ENCODE measurements at regions of chr4 and their contacts with region 1.

Region 1: DNA sequence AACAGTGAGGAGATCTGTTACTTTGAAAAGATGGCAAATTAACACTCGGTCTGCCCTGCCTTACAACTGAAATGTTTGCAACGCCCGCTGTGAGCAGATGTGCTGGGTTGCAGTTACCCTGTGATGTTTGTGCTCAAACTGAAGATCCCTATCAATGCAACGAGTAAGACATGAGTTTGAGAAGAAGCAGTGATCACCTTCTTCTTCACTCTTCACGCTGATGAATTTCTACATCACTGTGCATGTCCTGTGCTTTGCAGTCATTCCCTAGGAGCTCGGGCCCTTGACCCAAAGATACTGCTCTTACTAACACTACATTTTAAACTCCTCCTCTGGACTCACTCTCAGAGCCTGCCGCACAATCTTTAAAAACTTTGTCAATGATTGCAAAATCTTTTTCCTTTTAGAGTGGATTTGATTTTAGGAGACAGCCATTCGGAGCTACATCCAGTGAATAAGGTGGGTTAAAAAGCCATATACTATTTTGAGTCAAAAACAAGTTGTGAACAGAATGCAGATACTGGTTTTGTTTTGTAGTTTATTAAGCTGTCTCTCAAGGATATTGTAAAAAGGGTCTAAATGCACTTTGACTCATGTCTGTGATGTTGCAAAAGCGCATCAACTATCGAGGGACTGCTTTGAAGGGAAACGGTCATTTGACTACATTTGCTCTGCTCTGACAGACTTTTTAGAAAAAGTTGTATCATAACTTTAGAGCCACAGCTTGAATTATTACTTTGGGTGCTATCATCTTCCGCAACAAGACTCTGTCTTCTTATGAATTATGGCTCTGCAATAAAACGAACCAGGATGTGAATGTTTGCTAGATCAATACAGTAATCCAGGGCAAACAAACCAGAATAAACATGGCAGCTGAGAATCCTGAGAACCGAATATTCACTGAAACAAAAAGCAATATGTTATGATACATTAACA is 5.7 kb upstream of the RHOH start:
- DNase-seq: peak; percentile 78
- ATAC-seq: peak; percentile 82
- H3K4me3 ChIP-seq: peak overlapping the region; percentile 52
- H3K27ac ChIP-seq: peak overlapping the region; percentile 94
- H3K4me1 ChIP-seq: peaks cover 32% of the 10 kb centered on the region
- H3K27me3 ChIP-seq: no peaks in the 10 kb centered on the region
- CTCF ChIP-seq: no peak

Region 2: DNA sequence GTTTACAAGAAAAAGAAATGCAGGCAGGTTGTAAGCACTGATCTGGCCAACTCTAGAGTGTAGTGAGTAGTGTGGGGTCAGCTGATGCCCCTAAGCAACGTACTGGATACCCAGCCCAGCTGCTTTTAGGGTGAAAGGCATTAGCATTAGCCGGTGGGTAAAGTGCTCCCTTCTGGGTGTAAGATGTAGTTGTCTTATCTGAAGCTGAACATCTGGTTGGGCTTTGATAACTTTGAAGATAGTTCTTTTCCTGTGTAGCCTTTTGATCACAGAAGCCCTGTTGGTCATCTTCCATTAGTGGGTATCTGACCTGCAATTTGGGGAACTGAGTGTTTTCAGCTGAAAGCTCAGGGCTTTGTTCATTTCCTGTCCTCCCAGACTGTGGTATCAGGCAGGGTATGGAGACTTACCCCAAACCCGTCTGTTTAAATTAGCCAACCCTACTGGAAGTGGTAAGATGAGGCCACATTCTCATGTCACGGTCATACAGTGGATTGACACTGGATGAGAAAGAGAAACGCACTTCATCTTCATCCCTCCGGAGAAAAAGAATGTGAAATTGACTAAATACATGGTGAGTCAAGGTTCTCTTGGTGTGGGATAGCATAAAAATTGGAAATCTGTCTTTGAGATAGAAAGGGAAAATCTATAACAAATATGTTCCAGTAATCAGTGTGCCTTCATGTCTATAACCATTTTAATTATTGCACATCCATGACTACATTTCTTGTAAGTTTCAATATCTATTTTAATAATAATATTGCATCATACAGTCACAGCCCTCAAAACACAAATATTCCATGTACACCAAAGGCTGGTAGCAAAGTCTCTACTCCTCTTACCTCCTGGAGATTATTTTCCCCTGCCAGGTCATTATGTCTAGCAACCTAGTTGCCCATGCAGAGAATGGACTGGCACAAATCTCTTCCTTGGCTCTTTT is 14.4 kb after region 1 on chr4:
- CTCF ChIA-PET with region 1: no interaction called
- POLR2A ChIA-PET with region 1: no interaction called
- intact Hi-C with region 1: no loop called
- DNase-seq: no peak
- ATAC-seq: no peak
- H3K4me3 ChIP-seq: no peak overlapping the region
- H3K27ac ChIP-seq: no peak overlapping the region
- H3K4me1 ChIP-seq: peaks cover 9% of the 10 kb centered on the region
- H3K27me3 ChIP-seq: no peaks in the 10 kb centered on the region
- CTCF ChIP-seq: no peak

Region 3: DNA sequence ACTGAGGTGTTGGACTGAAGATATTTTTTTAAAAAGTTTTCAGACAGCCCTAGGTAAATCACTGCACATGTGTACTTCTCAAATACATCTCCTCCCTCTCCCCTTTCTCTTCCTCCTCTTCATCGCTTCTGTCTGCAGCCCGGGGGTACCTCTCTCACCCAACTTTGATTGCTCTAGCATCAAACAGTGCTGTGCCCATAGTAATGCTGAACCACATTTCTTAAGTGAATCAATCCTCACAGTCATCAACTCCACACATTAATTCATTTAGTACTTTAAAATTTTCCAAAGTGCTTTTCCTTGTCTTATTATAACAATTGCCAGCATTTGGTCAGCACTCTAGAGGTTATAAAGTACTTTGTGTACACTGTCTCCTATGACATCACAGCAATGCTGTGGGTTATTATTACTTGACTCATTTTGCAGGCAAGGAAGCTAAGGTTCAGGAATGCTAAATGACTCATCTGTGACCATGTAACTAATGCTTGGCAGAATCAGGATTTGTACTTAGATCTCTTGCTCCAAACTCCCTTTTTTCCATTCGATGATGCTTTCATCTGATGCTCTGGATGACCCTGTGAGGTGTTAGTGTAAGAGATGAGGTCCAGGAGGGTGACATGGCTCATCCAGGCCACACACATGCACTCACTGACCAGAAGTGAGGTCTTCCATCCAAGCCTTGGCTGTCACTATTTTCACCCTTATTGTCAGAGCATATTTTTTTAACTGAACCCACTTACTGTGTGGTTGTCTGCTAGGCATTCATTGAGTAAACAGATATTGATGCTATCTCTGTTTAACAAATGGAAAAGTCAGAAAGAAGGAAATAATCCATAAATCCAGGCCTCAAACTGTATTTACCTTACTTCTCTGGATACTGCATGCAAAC is 64.5 kb after region 1 on chr4:
- CTCF ChIA-PET with region 1: interaction called, 13 read pairs
- POLR2A ChIA-PET with region 1: no interaction called
- intact Hi-C with region 1: loop called (anchors 2 kb)
- DNase-seq: peak; percentile 88
- ATAC-seq: peak; percentile 72
- H3K4me3 ChIP-seq: no peak overlapping the region
- H3K27ac ChIP-seq: peak overlapping the region; percentile 99
- H3K4me1 ChIP-seq: peaks cover 49% of the 10 kb centered on the region
- H3K27me3 ChIP-seq: no peaks in the 10 kb centered on the region
- CTCF ChIP-seq: no peak

Region 4: GRCh38 chr4:40289366-40290188 is 98.4 kb after region 1 on chr4:
- CTCF ChIA-PET with region 1: no interaction called
- POLR2A ChIA-PET with region 1: interaction called, 10 read pairs
- intact Hi-C with region 1: no loop called
- DNase-seq: no peak
- ATAC-seq: no peak
- H3K4me3 ChIP-seq: no peak overlapping the region
- H3K27ac ChIP-seq: peak overlapping the region; percentile 90
- H3K4me1 ChIP-seq: peaks cover 19% of the 10 kb centered on the region
- H3K27me3 ChIP-seq: no peaks in the 10 kb centered on the region
- CTCF ChIP-seq: no peak

Region 5: GRCh38 chr4:40309250-40309774 is 118.2 kb after region 1 on chr4:
- CTCF ChIA-PET with region 1: no interaction called
- POLR2A ChIA-PET with region 1: no interaction called
- intact Hi-C with region 1: loop called (anchors 2 kb)
- DNase-seq: peak; percentile 86
- ATAC-seq: peak; percentile 98
- H3K4me3 ChIP-seq: peak overlapping the region; percentile 55
- H3K27ac ChIP-seq: peak overlapping the region; percentile 29
- H3K4me1 ChIP-seq: peaks cover 6% of the 10 kb centered on the region; the same call in 1 of the 2 replicates
- H3K27me3 ChIP-seq: no peaks in the 10 kb centered on the region
- CTCF ChIP-seq: peak; percentile 82

Region 6: DNA sequence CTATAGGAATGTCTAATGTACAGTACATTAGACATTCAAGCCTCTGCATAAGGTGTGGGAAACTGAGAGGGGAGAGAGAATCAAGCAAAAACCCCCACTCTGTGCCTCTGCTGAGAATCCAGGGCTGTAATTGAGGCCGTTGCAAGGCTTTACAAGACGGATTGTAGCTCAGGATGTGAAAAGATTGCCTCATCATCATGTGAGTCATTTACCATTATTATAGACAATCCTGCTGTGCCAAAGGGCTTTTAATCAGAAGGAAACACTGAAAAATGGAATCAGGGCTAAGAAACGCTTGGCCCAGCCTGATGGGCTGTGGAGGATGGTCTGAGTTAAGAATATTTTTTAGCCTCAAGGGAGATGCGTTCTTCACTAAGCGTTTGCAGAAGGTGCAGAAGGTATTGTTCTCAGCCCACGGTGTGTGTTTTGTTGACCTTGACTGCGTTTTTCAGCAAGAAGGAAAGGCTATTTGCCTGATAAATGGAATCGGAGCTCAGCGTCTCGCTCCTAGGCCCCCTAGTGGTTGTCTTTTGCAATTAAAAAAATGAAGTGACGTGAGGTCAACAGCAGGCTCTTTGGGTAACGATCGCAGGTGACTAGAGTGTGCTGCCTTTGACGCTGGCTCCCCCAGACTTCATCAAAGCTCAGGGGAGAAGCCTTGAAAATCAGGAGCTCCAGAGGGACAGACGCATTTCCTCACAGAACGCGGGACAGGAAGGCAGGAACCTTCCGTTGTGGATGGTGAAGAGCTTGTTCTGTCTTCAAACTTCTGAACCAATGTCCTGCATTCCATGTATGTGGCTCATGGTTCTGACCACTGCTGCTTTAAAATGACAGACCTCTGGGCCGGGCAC is 125.9 kb after region 1 on chr4:
- CTCF ChIA-PET with region 1: no interaction called
- POLR2A ChIA-PET with region 1: no interaction called
- intact Hi-C with region 1: loop called (anchors 2 kb)
- DNase-seq: peak; percentile 82
- ATAC-seq: peak; percentile 81
- H3K4me3 ChIP-seq: peak overlapping the region; percentile 59
- H3K27ac ChIP-seq: peak overlapping the region; percentile 100
- H3K4me1 ChIP-seq: peaks cover 46% of the 10 kb centered on the region
- H3K27me3 ChIP-seq: no peaks in the 10 kb centered on the region
- CTCF ChIP-seq: peak; percentile 81